Activated CD4-positive, alpha-beta memory T cell treated with anti-CD3 and anti-CD28 coated beads for 36 hours (primary cell): ENCODE measurements at regions of chr22 and their contacts with region 1.

Region 1: DNA sequence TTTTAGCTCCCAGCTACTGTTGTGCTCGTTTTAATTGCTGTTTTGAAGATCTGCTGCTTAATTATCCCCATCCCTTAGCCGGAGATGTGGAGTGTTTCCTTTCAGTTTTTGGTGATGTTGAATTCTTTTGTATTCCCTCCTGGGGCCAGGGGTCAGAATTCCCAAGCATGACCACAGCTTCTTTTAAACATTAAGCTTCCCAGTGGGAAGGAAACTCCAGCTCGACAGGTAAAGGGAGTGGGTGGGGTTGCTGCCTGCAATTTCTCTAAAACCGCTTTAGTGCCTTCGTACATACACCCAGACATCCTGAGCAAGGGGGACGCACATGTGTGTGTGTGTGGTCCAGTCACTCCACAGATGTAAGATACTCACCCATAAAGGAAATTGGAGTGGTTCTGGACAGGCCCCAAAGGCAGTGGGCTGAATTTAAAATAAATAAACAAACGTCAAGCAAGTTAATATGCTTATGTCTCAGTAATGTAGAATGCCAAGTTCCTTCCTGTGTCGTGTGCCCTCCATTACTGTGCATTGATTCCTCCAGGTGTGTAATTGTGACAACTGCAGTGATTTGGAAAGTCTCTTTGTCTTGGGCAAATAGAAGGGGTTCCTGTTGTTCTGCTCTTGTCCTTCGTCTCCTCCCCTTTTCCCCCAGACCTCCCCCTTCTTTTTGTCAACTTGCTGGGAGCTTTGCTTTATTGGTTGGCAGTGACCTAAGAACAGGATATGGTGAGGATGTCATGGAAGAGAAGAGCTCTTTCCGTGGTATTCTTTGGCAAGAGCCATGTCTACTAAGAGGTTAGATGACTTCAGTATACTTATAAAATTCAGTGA is 19.2 kb upstream of the ADSL start:
- DNase-seq: no peak
- H3K4me3 Mint-ChIP-seq: no peak overlapping the region
- H3K27ac Mint-ChIP-seq: peak overlapping the region; percentile 77
- H3K4me1 Mint-ChIP-seq: peaks cover 94% of the 10 kb centered on the region
- H3K27me3 Mint-ChIP-seq: no peaks in the 10 kb centered on the region

Region 2: DNA sequence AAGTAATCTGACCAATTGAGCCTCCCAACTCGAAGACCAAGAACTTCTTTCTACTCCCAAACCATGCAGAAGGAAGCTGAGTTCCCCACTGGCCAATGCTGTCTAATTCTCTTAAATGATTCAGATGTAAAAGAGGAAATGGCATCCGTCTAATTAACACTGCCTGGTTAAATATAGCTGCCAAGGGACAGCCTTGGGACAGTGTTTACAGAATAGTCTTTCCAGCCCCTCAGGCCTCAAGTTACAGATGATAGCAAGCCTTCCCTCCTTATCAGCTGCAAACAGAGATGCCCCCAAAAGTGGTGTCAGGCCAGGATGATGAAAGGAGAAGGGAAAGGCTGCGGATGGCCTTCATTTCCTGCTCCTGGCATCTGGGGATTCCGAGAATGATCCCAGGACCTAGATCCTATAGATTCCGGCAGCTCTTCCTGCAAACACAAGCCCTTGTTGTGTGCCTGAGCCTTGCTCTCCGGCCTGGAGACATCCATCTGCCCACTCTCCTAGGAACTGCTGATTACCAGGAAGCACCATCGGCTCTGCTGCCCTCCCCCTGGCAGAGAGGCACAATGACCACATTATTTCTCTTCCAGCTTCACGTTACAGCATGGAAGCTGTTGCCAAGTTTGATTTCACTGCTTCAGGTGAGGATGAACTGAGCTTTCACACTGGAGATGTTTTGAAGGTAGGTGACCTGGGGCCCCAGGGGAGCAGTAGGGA is 380.5 kb before region 1 on chr22:
- CTCF ChIA-PET with region 1: no interaction called
- POLR2A ChIA-PET with region 1: no interaction called
- intact Hi-C with region 1: loop called (anchors 10 kb)
- DNase-seq: no peak
- H3K4me3 Mint-ChIP-seq: peak overlapping the region; percentile 51
- H3K27ac Mint-ChIP-seq: peak overlapping the region; percentile 86
- H3K4me1 Mint-ChIP-seq: peaks cover 93% of the 10 kb centered on the region
- H3K27me3 Mint-ChIP-seq: no peaks in the 10 kb centered on the region

Region 3: GRCh38 chr22:40250608-40251007 is 76.5 kb before region 1 on chr22:
- CTCF ChIA-PET with region 1: no interaction called
- POLR2A ChIA-PET with region 1: no interaction called
- intact Hi-C with region 1: loop called (anchors 2 kb)
- DNase-seq: peak; percentile 73
- H3K4me3 Mint-ChIP-seq: no peak overlapping the region
- H3K27ac Mint-ChIP-seq: peak overlapping the region; percentile 82
- H3K4me1 Mint-ChIP-seq: peaks cover 79% of the 10 kb centered on the region
- H3K27me3 Mint-ChIP-seq: no peaks in the 10 kb centered on the region

Region 4: DNA sequence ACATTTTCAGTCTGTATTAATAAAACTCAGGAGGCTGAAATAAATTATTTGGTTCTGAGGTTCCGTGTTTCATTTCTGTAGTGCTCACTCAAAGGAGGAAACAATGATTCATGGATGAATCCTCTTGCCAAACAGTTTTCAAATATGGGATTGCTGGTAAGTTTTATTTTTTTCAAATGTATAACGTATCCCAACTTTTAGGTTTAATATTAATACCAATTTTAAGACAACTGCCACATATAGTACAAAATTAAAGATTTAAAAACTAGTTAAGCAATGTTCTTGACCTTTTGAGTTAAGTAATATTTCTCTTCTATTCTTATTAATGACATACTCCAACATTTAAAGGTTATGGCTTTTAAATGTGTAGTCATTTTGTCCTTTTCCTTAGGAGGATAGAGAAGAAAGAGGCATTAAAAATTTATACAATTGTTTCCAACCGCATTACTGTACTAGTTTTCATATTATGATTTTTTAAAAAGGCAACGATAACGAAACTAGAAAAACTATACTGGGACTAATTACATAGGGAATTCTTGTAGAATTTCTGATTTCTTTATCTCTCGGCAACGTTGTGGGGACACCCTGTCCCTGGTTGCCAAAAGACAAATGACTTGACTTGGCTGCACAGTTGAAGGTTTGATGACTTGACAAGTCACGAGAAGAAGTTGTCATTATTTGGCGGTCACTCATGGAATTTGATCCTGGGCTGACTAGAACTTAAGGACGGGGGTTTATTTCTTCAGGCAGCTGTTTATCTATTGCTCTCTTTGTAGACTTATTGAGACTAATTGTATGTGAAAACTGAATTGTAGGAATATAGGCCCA is 49.9 kb before region 1 on chr22:
- CTCF ChIA-PET with region 1: no interaction called
- POLR2A ChIA-PET with region 1: interaction called, 4 read pairs
- intact Hi-C with region 1: loop called (anchors 1 kb)
- DNase-seq: no peak
- H3K4me3 Mint-ChIP-seq: no peak overlapping the region
- H3K27ac Mint-ChIP-seq: peak overlapping the region; percentile 93
- H3K4me1 Mint-ChIP-seq: peaks cover 51% of the 10 kb centered on the region
- H3K27me3 Mint-ChIP-seq: no peaks in the 10 kb centered on the region